ENCODE measurements at regions of chr15 and their contacts with region 1.

Region 1: DNA sequence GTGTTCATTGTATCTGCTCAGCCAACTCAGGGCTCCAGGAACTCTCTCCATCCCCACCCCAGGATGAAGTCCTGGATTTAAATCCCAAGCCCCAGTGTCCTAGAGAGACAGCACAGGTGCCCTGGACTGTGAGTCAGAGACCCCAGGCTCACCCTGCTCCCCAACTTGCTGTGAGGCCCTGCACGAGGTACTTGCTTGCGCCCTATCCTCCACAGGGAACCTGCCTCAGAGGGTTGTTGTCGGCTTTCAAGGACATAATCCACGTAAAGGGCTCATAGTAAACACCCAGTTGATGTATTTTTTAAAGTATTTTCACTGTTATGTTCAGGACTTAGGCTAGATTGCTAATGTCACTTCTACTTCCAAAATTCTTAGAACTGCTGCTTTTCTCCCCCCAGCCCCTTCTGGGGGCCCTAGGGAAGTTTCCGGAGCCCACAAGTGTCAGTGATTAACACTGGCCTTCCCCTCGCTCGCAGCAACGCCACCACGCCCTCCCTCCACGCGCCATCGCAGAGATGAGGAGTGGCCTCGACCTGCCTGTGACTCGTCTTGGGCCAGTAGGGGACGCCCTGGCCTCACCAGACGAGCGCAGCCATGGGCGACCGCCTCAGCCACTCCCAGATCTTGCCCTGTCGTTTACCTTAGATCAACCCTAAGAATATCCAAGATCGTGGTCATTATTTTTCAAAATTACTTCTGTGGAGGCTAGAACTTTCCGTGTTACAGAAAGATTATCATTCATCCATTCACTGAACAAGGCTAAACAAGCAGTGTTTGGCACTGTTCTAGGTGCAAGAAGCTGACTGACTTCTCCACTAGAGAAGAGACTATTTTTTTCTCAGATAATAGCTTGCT is 6.0 kb upstream of the SRP14 start:
- DNase-seq: peak; percentile 89 to 95
- ATAC-seq: peak; percentile 85

Region 2: GRCh38 chr15:40108855-40109735 is 64.2 kb after region 1 on chr15 and contains the start of gene BMF:
- intact Hi-C with region 1: loop called in 1 of 2 experiments (anchors 5 kb)
- DNase-seq: peak; percentile 100
- ATAC-seq: peak; percentile 72
- total RNA-seq, gene BMF: 7.0 to 25.4 TPM

Region 3: DNA sequence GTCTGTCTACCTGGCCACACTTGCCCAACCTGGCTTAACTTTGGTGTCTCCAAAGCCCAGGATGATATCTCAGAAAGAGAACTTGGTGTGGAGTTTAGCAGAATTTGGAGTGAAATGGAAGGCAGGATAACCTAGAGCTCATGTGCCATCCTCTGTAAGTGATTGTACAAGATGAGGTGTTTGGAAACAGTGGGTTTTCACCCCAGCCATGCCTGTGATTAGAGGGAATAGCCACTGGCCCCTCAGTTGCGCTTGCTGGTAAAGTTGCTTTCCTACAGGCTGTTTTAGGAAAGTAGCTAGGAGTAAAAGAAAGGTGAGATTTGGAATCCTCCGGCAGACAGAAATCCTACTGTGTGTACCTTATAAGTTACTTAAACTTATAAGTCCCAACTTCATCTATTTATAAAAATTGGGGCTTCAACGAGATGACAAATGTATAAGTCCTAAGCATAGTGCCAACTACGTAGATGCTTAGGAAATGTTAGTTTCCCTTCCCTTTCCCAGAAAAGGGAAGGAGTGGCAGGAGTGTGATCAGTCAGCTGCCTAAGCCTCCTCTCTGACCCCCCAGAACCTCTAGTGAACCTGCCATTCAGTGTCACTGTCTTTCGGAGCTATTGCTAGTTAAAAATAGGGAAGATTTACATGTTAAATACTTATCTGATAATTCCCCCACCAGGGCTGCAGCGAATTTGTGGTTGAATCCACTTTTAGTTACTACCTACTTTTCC is 77.1 kb after region 1 on chr15:
- intact Hi-C with region 1: no loop called
- DNase-seq: no peak
- ATAC-seq: no peak

Measured in left colon (tissue), 2 donors.